ENCODE measurements at regions of chr7 and their contacts with region 1.

Region 1: GRCh38 chr7:142587578-142588191 is 161.6 kb upstream of the PRSS1 start:
- DNase-seq: no peak
- H3K4me3 Mint-ChIP-seq: peak overlapping the region; percentile 18
- H3K27ac Mint-ChIP-seq: peak overlapping the region; percentile 45
- H3K4me1 Mint-ChIP-seq: peaks cover 9% of the 10 kb centered on the region
- H3K27me3 Mint-ChIP-seq: no peaks in the 10 kb centered on the region

Region 2: DNA sequence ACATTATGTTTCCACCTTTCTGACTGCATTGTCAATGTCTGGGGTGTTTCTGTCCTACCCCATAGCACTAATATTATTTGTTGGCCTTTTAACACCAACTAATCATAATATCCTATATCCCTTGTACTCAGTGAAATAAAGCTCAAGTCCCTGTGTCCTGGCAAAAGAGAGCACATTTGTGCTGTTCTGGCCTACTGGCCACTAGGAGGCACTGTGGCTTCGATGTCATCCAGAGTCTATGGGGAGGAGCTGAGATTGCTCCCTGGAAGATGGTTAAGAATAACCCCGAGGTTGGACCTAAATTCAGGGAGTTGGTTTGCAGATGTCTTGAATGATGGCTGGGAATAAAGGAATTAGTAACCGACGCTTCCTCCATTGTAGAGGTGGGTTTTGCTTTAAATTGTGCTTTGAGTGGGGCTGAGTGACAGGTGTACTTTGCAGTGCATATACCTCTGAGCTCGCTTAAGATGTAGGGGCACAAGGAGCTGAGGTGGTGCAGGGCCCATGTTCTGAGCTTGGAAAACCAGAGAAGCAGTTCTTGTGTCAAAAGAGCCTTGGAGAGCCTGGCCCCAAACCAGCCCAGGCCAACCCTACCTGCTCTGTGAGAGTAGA is 29.6 kb before region 1 on chr7:
- CTCF ChIA-PET with region 1: interaction called, 51 read pairs
- DNase-seq: peak; percentile 70
- H3K4me3 Mint-ChIP-seq: peak overlapping the region; percentile 39
- H3K27ac Mint-ChIP-seq: no peak overlapping the region
- H3K4me1 Mint-ChIP-seq: peaks cover 17% of the 10 kb centered on the region
- H3K27me3 Mint-ChIP-seq: peaks cover 43% of the 10 kb centered on the region

Region 3: GRCh38 chr7:142598297-142598696 is 10.6 kb after region 1 on chr7:
- CTCF ChIA-PET with region 1: interaction called, 13 read pairs
- DNase-seq: no peak
- H3K4me3 Mint-ChIP-seq: no peak overlapping the region
- H3K27ac Mint-ChIP-seq: no peak overlapping the region
- H3K4me1 Mint-ChIP-seq: no peaks in the 10 kb centered on the region
- H3K27me3 Mint-ChIP-seq: peaks cover 32% of the 10 kb centered on the region

Measured in activated naive CD4-positive, alpha-beta T cell treated with anti-CD3 and anti-CD28 coated beads, Interleukin-2, amount 10 ng/mL, durations not matched to agents 7 days and 5 days (primary cell).